CD8-positive, alpha-beta memory T cell (primary cell): ENCODE measurements at regions of chr11 and their contacts with region 1.

Region 1: DNA sequence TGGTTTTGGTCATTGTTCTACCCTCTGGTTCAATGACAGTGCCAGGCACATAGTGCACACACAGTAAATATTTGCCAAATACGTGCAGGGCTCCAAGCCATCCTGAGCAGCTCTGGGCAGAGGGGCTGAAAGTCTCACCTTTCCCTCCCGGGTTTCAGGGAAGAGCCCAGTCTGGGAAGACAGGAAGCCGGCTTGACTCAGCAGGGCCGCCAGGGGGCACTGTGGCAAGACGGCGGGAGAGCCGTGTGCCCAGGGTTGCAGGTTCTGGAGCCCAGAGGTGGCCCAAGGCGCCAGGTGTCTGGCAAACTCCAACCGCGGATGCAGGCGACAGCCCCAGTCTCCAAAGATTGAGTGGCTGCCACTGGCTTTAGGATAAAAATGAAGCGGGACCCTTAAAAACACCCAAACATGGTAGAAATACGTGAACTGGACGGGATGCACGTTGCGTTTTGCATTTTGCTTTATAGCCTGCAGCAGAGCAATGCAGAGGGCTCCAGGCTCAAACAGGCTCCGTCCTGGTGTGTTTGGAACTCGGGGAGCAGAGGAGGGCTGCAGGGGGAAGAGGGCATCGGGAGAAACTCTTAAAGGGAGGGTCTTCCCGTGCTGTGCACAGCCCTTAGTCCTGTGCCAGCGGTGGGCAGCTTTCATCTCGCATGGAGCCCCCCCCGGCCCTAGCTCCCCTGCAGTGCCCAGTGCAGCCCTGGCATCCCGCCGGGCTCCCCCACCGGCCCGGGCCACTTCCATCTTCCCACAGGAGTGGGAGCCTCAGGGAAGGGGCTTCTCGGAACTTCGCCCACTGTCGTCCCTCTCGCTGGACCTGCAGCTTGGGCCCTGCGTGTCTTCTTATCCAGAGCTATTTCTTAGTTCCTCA is 10.7 kb downstream of the KRTAP5-5 start:
- DNase-seq: peak in 4 of 5 donors; percentile 7 to 25 (median 14)
- H3K4me3 ChIP-seq: no peak overlapping the region
- H3K4me3 Mint-ChIP-seq: no peak overlapping the region
- H3K27ac ChIP-seq: no peak overlapping the region
- H3K27ac Mint-ChIP-seq: peak overlapping the region in 1 of 8 donors; percentile 8
- H3K4me1 ChIP-seq: no peaks in the 10 kb centered on the region
- H3K4me1 Mint-ChIP-seq: peaks cover 0 to 5% (median 0%) of the 10 kb centered on the region in 3 donors
- H3K27me3 ChIP-seq: no peaks in the 10 kb centered on the region
- H3K27me3 Mint-ChIP-seq: peaks cover 17 to 26% of the 10 kb centered on the region in 2 donors

Region 2: GRCh38 chr11:1652771-1653540 is 12.6 kb after region 1 on chr11:
- CTCF ChIA-PET with region 1: interaction called, 13 read pairs
- POLR2A ChIA-PET with region 1: no interaction called
- DNase-seq: peak; percentile 65 to 82 (median 71)
- H3K4me3 ChIP-seq: no peak overlapping the region
- H3K4me3 Mint-ChIP-seq: no peak overlapping the region
- H3K27ac ChIP-seq: no peak overlapping the region
- H3K27ac Mint-ChIP-seq: no peak overlapping the region
- H3K4me1 ChIP-seq: no peaks in the 10 kb centered on the region
- H3K4me1 Mint-ChIP-seq: no peaks in the 10 kb centered on the region
- H3K27me3 ChIP-seq: peaks cover 13% of the 10 kb centered on the region
- H3K27me3 Mint-ChIP-seq: peaks cover 15 to 45% of the 10 kb centered on the region in 2 donors